ENCODE measurements at regions of chr5 and their contacts with region 1.

Region 1: GRCh38 chr5:142655339-142656267 is 30.3 kb downstream of the FGF1 start:
- DNase-seq: no peak
- H3K4me3 ChIP-seq: no peak overlapping the region
- H3K27me3 ChIP-seq: no peaks in the 10 kb centered on the region
- CTCF ChIP-seq: peak; percentile 100

Region 2: DNA sequence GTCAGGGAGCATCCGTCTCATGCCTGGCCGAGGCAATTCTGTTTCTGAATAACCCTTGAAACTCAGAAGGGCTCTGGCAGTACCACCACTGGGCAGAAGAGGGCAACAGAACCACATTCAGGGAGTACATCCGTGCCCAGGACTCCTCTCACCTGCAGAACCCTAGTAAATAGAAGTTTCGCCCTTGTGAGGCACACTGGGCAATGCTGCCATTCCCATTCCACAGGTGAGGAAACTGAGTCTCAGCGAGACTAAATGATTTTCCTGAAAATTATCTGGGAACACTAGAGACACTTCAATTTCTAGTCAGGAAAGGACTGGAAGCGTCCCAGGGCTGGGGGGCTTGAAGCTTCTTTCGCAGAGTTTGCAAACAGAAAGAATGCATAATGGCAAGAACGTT is 44.4 kb before region 1 on chr5:
- CTCF ChIA-PET with region 1: interaction called, 44 read pairs
- POLR2A ChIA-PET with region 1: no interaction called
- DNase-seq: no peak
- H3K4me3 ChIP-seq: no peak overlapping the region
- H3K27me3 ChIP-seq: no peaks in the 10 kb centered on the region
- CTCF ChIP-seq: peak; percentile 96

Region 3: DNA sequence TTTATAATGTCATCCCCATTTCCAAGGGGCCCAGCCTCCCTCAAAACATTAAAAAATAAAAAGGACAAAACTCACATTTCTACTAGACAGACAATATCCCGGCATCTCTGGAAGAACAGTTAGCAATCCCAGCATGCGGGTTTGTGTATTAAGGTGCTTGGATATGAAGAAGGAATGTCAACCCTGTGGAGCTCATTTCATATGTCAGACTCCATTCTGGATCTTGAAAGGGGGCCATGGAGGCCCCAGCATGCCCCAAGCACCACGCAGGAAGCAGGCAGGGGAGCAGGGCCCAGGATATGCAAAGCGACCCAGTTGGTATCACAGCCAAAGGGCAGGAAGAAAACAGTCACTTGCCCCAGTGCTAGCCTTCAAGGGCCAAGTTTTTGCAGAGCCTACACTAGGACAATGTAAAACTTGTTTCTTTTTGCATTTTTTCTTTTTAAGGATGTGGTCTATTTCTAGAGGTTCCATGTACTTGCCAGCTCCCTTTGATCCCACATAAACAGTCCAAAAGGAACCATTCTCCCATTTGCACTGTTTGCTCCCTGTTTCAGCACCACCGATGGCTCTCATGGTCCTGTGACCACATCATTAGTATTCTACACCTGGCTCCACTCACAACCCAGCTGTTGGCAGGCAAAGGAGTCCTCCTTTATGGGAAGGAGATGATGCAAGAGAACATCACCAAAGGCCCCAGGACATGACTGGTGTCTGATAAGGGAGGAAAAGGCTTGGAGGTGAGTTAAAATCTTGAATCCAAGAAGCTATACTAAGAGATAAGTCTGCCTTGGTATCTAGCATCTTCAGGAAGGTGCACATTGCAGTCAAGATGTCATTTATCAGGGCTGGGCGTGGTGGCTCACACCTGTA is 28.0 kb before region 1 on chr5:
- CTCF ChIA-PET with region 1: interaction called, 12 read pairs
- POLR2A ChIA-PET with region 1: no interaction called
- DNase-seq: no peak
- H3K4me3 ChIP-seq: no peak overlapping the region
- H3K27me3 ChIP-seq: no peaks in the 10 kb centered on the region
- CTCF ChIP-seq: no peak

Region 4: DNA sequence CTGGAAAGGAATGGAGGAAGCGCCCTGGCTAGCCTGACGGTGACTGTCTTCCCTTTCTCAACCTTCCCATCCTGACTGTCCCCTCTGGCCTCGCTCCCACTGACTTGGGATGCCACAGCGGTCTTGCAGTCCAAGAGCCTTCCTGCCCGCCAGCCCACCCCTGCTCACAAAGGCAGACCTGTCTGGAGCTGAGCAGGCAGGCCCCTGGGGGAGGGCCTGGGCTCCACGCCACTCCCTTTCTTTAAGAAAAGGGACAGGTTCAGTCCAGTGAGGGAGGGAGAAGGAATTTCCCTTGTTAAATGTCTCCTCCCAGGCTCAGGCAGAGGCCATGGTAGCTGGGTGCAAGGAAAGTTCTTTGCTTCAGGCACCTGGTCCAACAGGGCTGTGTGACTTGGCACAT is 12.2 kb after region 1 on chr5:
- CTCF ChIA-PET with region 1: interaction called, 29 read pairs
- POLR2A ChIA-PET with region 1: no interaction called
- DNase-seq: no peak
- H3K4me3 ChIP-seq: no peak overlapping the region
- H3K27me3 ChIP-seq: no peaks in the 10 kb centered on the region
- CTCF ChIP-seq: no peak

Region 5: GRCh38 chr5:142872795-142873194 is 217.2 kb after region 1 on chr5:
- CTCF ChIA-PET with region 1: no interaction called
- POLR2A ChIA-PET with region 1: no interaction called
- DNase-seq: no peak
- H3K4me3 ChIP-seq: no peak overlapping the region
- H3K27me3 ChIP-seq: peaks cover 9% of the 10 kb centered on the region
- CTCF ChIP-seq: no peak

Measured in BJ (cell line).